IMR-90 (cell line): ENCODE measurements at regions of chr2 and their contacts with region 1.

Region 1: DNA sequence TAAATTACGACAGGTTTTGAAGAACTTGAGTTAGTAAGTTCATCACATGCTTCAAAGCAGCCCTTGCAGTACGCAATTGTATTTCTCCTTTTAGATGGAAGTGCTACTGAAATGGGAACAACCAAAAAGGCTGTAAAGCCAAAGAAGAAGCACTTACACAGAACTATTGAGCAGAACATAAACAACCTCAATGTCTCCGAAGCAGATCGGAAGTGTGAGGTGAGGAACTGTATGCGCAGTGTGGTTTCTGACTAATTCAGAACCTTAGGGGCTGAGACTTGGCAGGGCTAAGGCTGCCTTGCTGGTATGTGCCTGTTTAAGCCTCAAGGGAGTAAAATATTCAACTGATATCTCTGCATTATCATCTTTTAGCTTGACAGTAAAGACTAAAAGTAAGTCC is 8.4 kb downstream of the NCAPH start:
- DNase-seq: peak; percentile 73
- ATAC-seq: peak; percentile 50; the same call in 1 of the 2 replicates
- H3K4me3 ChIP-seq: no peak overlapping the region
- H3K27ac ChIP-seq: no peak overlapping the region
- H3K4me1 ChIP-seq: peaks cover 8% of the 10 kb centered on the region
- H3K27me3 ChIP-seq: no peaks in the 10 kb centered on the region
- CTCF ChIP-seq: no peak
- POLR2A ChIP-seq: no peak
- RAD21 ChIP-seq: no peak

Region 2: DNA sequence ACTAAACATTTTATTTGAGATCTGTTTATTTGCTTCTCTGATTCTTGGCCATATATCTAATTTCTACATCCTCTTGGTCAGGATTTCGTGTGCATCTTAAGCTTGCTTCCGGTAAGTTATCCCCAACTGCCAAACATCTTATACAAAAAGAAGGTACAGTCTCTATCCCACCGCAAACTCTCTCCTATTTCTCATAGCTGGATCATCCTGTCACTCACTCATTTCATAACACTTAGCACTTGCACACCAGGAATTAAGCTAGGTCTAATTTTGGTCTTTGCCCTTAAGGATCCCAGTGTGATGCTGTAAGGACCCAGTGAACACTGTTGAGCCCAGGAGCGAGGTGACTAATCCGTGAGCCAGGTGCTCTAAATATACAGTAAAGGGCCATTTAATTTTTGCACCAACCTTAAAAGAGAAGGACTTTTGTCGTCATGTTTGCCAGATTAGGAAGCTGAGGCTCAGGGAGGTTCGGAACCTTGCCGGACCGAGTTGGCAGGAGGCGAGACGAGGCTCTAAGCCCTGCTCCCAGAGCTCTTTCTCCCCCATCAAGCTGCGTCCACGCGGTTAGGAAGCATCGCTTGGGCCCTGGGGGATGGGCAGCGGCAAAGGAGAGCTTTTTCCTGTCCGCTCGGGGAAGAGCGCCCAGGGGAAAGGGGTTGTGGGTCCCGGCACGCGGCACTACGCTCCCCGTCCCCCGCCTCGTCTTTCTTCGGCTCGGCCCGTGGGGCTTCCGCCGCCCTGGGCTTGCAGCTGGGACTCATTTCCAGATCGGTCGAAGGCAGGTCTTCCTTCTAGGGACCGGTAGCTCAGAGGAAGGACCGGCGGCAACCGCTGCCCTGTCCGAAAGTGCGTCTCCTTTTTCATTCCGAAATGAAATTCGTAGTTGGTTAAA is 23.0 kb before region 1 on chr2:
- CTCF ChIA-PET with region 1: interaction called, 3 read pairs
- POLR2A ChIA-PET with region 1: interaction called, 16 read pairs
- dilution Hi-C with region 1: no loop called
- in situ Hi-C with region 1: no loop called
- intact Hi-C with region 1: no loop called
- DNase-seq: no peak
- ATAC-seq: peak; percentile 68
- H3K4me3 ChIP-seq: peak overlapping the region; percentile 63
- H3K27ac ChIP-seq: no peak overlapping the region
- H3K4me1 ChIP-seq: peaks cover 2% of the 10 kb centered on the region
- H3K27me3 ChIP-seq: peaks cover 18% of the 10 kb centered on the region
- CTCF ChIP-seq: no peak
- POLR2A ChIP-seq: no peak
- RAD21 ChIP-seq: no peak